Activated CD8-positive, alpha-beta T cell treated with anti-CD3 and anti-CD28 coated beads, Interleukin-2, amount 10 ng/mL, durations not matched to agents 7 days and 5 days (primary cell): ENCODE measurements at regions of chr7 and their contacts with region 1.

Region 1: DNA sequence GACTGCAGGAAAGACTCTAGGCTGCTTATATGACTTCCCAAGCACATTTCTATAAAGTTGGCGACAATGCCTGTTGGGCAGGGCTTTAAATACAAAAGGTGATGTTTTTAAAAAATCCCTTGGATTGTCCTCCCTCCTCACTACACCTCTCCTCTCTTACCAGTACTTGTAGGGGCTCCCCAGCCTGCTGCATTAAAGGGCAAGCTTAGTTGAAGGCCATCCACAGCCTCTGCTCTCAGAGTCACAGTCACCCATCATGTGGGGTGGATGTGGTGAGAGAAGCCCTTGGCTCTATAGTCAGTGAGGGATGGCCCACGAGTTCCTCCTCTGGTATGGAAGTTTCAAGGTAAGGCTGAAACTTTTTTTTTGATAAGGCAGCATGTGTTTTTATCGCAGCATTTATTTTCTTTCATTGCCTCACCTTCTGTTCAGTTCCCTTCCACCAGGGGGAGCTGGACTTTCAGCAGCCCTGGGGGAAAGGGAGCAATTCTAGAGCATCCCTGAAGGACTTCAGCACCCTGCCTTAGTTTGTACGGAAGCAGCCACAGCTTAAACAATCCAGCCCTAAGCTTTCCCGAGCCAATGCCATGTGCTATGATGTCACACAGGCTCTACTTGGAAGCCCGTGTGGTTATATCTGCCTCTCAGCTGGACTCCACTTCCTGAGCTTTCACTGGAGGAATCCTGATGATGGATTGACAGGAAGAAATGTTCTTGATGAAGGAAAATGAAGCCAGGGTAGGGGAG is 131.9 kb downstream of the CALCR start:
- DNase-seq: peak; percentile 48
- ATAC-seq: peak; percentile 64
- H3K4me3 Mint-ChIP-seq: no peak overlapping the region
- H3K27ac Mint-ChIP-seq: no peak overlapping the region
- H3K4me1 Mint-ChIP-seq: no peaks in the 10 kb centered on the region
- H3K27me3 Mint-ChIP-seq: peaks cover 6% of the 10 kb centered on the region

Region 2: DNA sequence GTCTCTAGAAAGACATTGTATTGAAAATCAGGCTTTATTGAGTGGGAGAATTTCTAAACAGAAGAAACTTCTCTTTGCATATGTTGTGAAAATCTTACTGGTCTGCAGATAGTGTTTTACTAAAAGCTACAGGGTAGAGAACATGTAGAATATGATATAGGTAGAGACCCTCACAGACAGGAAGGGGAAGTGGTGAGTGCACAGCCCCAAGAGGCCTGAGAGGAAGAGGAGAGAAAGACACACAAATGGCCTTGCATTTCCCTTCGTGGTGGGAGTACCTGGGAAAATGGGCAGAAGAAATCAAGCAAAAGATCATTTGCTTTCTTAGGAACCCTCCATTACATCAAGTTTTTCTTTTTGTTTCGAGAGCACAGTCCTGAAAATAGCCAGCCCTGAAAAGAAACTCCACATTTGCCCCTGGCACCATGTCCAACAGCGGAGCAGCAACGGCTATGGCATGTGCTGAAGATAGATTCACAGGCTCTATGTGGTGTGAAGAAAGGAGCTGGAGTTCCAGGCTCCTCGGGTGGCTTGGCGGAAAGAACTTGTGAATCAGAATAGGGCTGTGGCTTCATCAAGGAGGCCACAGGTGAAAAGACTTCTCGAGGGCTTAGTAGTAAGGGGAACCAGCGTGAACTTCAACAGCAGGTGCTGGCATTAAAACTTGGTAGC is 11.6 kb before region 1 on chr7:
- CTCF ChIA-PET with region 1: interaction called, 15 read pairs
- POLR2A ChIA-PET with region 1: no interaction called
- DNase-seq: peak; percentile 28
- ATAC-seq: peak; percentile 64
- H3K4me3 Mint-ChIP-seq: no peak overlapping the region
- H3K27ac Mint-ChIP-seq: peak overlapping the region; percentile 86
- H3K4me1 Mint-ChIP-seq: peaks cover 24% of the 10 kb centered on the region
- H3K27me3 Mint-ChIP-seq: no peaks in the 10 kb centered on the region

Region 3: DNA sequence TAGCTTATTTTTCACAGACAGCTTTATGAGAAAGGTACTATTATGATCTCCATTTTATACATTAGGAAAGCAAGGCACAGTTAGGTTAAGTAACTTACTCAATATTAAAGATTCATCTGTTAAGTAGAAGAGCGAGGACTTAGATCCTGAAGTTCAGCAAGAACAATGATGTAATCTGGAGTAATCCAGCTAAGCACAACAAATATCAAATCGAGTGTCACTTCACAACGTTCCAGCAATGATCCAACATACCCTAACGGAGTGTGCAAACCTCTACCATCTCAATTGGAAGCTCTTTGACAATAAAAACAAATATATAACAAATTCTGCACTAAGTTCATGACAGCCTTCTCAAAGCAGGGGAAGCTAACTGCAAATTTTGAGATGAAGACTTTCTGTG is 10.6 kb after region 1 on chr7:
- CTCF ChIA-PET with region 1: interaction called, 11 read pairs
- POLR2A ChIA-PET with region 1: no interaction called
- DNase-seq: no peak
- ATAC-seq: no peak
- H3K4me3 Mint-ChIP-seq: no peak overlapping the region
- H3K27ac Mint-ChIP-seq: no peak overlapping the region
- H3K4me1 Mint-ChIP-seq: no peaks in the 10 kb centered on the region
- H3K27me3 Mint-ChIP-seq: peaks cover 13% of the 10 kb centered on the region